Posterior vena cava (tissue), 2 donors: ENCODE measurements at regions of chr21 and their contacts with region 1.

Region 1: DNA sequence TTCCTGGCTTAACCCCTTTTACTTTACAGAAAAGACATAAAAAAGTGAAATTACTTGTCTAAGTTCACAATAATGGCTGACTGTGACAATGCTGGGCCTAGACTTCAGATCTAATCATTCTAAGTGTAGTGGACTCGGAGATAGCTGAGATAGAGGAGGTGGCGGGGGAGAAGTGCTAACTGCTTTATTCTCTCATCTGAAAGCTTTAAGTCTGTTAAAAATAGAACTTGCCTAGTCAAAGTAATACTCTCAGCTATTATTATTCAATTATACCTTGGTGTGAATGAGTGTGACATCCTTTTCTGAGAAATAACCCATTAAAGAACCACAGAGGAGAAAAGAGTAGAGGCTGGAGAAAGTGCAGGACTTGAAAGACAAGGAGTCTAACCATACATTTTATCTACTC is 96.1 kb upstream of the OLIG2 start:
- DNase-seq: no peak

Region 2: DNA sequence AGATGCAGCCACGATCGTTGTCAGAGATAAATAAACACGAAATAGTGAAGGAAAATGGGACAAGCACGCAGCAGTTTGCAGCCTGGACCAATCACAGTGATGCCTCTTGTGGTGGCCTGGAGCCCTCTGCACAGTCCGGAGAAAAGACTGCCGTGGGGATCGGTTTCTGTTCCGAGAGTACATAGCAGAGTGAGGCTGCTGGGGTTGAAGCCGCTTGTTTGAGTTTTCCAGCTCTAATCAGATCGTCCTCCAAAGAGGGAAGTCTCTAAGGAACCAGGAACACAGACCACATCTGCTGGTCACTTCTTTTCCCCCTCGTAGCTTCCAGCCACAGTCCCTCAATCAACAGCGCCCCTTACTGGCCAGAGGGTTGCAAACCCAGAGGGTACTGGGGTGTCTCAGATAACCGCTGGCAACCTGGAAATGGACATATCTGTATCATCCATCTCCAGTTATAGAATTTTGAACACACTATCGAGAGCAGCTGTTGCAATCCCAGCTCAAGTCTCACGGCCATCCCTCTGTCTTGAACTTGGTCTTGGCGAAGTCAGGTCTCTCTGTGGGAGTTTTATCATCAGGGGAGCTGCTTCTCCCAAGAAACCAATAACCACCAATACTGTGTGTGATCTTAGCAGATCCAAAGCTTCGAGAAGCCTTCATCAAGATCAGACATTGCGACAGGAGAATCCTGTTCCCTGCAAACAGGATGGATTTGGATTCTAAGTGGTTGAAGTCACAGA is 197.7 kb after region 1 on chr21:
- intact Hi-C with region 1: loop called in 1 of 2 experiments (anchors 10 kb)
- DNase-seq: peak; percentile 87